ENCODE measurements at regions of chr15 and their contacts with region 1.

Region 1: DNA sequence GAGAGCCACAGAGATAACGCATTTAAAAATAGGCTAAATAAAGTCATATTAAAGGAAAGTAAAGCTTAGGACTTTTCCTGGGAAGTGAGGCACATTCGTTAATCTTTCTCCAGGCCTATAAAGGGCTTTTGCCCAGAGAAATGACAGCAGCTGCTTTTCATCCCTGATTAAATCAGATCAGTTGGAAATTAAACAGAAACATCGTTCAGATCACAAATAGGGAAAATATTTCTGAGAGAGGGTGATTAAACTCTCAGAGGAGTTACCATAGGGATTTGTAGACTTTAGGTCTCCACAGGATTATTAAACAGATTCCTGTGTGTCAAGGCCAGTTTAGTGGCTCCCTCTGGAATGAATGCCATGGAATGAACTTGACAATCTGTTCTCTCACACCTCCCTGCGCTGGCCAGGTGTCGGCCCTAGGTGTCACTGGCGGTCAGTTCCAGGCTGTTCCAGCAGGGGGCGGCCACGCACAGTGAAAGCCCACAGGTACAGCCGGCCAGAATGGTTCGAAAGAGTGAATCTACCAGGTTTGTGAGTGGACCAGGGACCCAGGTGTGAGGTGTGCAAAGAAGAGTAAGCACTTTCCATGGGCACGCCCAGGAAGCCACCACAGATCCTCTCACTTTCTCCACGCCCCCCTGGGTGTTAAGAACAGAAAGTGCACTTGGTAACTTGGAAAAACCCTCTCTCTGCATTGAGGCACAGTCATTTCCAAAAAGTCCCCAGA is 253.0 kb upstream of the RASGRP1 start:
- DNase-seq: peak; percentile 85
- H3K4me3 Mint-ChIP-seq: no peak overlapping the region
- H3K27ac Mint-ChIP-seq: no peak overlapping the region
- H3K4me1 Mint-ChIP-seq: no peaks in the 10 kb centered on the region
- H3K27me3 Mint-ChIP-seq: no peaks in the 10 kb centered on the region
- CTCF ChIP-seq: peak; percentile 100

Region 2: GRCh38 chr15:38707802-38708671 is 109.6 kb before region 1 on chr15:
- CTCF ChIA-PET with region 1: interaction called, 8 read pairs
- POLR2A ChIA-PET with region 1: no interaction called
- intact Hi-C with region 1: loop called (anchors 1 kb)
- DNase-seq: peak; percentile 68
- H3K4me3 Mint-ChIP-seq: no peak overlapping the region
- H3K27ac Mint-ChIP-seq: no peak overlapping the region
- H3K4me1 Mint-ChIP-seq: no peaks in the 10 kb centered on the region
- H3K27me3 Mint-ChIP-seq: no peaks in the 10 kb centered on the region
- CTCF ChIP-seq: peak; percentile 76

Region 3: GRCh38 chr15:38828031-38828532 is 10.5 kb after region 1 on chr15:
- CTCF ChIA-PET with region 1: interaction called, 13 read pairs
- POLR2A ChIA-PET with region 1: no interaction called
- intact Hi-C with region 1: no loop called
- DNase-seq: no peak
- H3K4me3 Mint-ChIP-seq: no peak overlapping the region
- H3K27ac Mint-ChIP-seq: no peak overlapping the region
- H3K4me1 Mint-ChIP-seq: no peaks in the 10 kb centered on the region
- H3K27me3 Mint-ChIP-seq: peaks cover 11% of the 10 kb centered on the region
- CTCF ChIP-seq: no peak

Region 4: DNA sequence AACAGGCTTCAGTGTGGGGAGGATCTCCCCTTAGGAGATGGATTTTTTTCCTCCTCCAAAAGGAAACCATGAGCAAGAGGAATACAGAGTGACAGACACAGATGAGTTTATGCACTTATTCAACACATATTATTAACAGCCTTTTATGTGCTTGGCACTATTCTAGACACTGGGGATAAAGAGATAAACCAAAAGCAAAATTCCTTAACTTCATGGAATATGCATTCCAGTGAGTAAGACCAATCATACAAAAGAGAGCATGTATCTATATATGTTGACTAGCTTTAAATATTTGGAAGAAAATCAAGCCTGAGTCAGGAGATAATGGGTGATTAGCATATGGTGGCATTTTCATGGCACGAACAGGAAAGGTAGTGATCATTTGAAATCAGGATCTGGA is 31.5 kb after region 1 on chr15:
- CTCF ChIA-PET with region 1: interaction called, 10 read pairs
- POLR2A ChIA-PET with region 1: no interaction called
- intact Hi-C with region 1: no loop called
- DNase-seq: no peak
- H3K4me3 Mint-ChIP-seq: no peak overlapping the region
- H3K27ac Mint-ChIP-seq: no peak overlapping the region
- H3K4me1 Mint-ChIP-seq: no peaks in the 10 kb centered on the region
- H3K27me3 Mint-ChIP-seq: no peaks in the 10 kb centered on the region
- CTCF ChIP-seq: no peak

Region 5: DNA sequence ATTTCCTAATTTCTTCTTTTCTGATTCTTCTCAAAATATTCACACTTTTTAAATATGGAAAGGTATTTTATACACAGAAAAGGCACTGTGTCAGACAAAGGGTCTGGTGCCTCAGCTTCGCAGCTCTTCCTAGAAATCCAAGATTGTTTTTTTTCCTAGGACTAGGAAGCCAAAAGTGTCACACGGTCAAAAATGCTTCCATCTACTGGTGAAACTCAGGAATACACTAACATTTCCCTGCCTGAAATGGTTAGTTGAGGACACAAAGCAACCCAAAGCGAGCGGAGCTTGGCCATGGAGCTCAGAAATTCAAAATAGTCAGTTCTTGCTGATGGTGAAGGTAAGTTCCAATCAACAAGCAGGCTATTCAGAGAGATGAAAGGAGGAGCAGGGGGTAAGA is 173.5 kb after region 1 on chr15:
- CTCF ChIA-PET with region 1: interaction called, 65 read pairs
- POLR2A ChIA-PET with region 1: no interaction called
- intact Hi-C with region 1: loop called (anchors 1 kb)
- DNase-seq: peak; percentile 52
- H3K4me3 Mint-ChIP-seq: no peak overlapping the region
- H3K27ac Mint-ChIP-seq: no peak overlapping the region
- H3K4me1 Mint-ChIP-seq: peaks cover 10% of the 10 kb centered on the region
- H3K27me3 Mint-ChIP-seq: no peaks in the 10 kb centered on the region
- CTCF ChIP-seq: peak; percentile 41

Measured in MCF 10A (cell line).